Caco-2 (cell line): ENCODE measurements at regions of chr4 and their contacts with region 1.

Region 1: GRCh38 chr4:7843831-7844593 is 95.6 kb downstream of the AFAP1 start:
- DNase-seq: peak; percentile 73 to 79
- H3K4me3 ChIP-seq: no peak overlapping the region
- H3K4me3 Mint-ChIP-seq: no peak overlapping the region
- H3K27ac Mint-ChIP-seq: peak overlapping the region; percentile 25
- H3K4me1 ChIP-seq: peaks cover 6% of the 10 kb centered on the region; the same call in 1 of the 2 replicates
- H3K4me1 Mint-ChIP-seq: no peaks in the 10 kb centered on the region
- H3K27me3 ChIP-seq: no peaks in the 10 kb centered on the region
- H3K27me3 Mint-ChIP-seq: no peaks in the 10 kb centered on the region
- CTCF ChIP-seq: peak; percentile 66 to 71

Region 2: GRCh38 chr4:7770224-7771050 is 73.6 kb before region 1 on chr4:
- CTCF ChIA-PET with region 1: no interaction called
- POLR2A ChIA-PET with region 1: no interaction called
- intact Hi-C with region 1: loop called (anchors 1 kb)
- DNase-seq: peak; percentile 51 to 68
- H3K4me3 ChIP-seq: no peak overlapping the region
- H3K4me3 Mint-ChIP-seq: no peak overlapping the region
- H3K27ac Mint-ChIP-seq: peak overlapping the region; percentile 76
- H3K4me1 ChIP-seq: no peaks in the 10 kb centered on the region
- H3K4me1 Mint-ChIP-seq: peaks cover 24% of the 10 kb centered on the region
- H3K27me3 ChIP-seq: no peaks in the 10 kb centered on the region
- H3K27me3 Mint-ChIP-seq: no peaks in the 10 kb centered on the region
- CTCF ChIP-seq: peak; percentile 62 to 68

Region 3: GRCh38 chr4:7792616-7793015 is 51.4 kb before region 1 on chr4:
- CTCF ChIA-PET with region 1: no interaction called
- POLR2A ChIA-PET with region 1: no interaction called
- intact Hi-C with region 1: no loop called
- DNase-seq: no peak
- H3K4me3 ChIP-seq: no peak overlapping the region
- H3K4me3 Mint-ChIP-seq: no peak overlapping the region
- H3K27ac Mint-ChIP-seq: no peak overlapping the region
- H3K4me1 ChIP-seq: no peaks in the 10 kb centered on the region
- H3K4me1 Mint-ChIP-seq: no peaks in the 10 kb centered on the region
- H3K27me3 ChIP-seq: no peaks in the 10 kb centered on the region
- H3K27me3 Mint-ChIP-seq: no peaks in the 10 kb centered on the region
- CTCF ChIP-seq: no peak

Region 4: DNA sequence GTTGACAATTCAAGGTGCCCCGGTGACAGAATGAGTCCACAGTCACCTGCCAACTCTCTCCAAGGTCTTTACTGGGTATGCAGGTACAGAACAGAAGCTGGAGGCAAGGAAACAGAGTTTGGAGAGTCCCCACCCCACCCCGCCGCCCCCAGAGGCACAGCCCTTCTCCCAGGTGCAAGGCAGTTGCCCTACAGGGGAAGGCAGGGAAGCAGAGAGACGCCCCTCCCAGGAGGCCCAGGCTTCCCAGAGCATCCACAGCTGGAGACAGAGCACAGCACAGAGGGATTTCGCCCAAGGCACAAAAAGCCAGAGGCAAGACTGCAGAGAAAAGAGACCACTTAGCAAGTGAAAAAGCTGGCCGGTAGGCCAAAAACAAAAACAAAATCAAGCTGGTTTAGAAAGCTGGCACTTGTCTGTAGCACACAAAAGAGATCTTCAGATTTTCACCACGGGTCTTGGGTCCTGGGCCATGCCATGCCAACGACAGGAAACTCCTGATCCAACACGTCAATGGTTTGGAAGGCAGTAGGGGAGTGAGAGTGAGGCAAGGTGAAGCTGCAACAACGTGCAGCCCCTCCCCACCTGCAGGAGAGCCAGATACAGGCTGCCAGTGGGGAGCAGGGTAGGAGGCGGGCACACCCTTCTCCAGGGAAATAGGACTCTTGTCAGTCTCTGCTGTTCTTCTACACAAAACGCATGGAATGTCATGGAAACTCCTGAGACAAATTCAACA is 17.7 kb before region 1 on chr4:
- CTCF ChIA-PET with region 1: no interaction called
- POLR2A ChIA-PET with region 1: no interaction called
- intact Hi-C with region 1: no loop called
- DNase-seq: no peak
- H3K4me3 ChIP-seq: no peak overlapping the region
- H3K4me3 Mint-ChIP-seq: no peak overlapping the region
- H3K27ac Mint-ChIP-seq: no peak overlapping the region
- H3K4me1 ChIP-seq: peaks cover 8% of the 10 kb centered on the region; the same call in 1 of the 2 replicates
- H3K4me1 Mint-ChIP-seq: peaks cover 24% of the 10 kb centered on the region
- H3K27me3 ChIP-seq: no peaks in the 10 kb centered on the region
- H3K27me3 Mint-ChIP-seq: no peaks in the 10 kb centered on the region
- CTCF ChIP-seq: no peak

Region 5: DNA sequence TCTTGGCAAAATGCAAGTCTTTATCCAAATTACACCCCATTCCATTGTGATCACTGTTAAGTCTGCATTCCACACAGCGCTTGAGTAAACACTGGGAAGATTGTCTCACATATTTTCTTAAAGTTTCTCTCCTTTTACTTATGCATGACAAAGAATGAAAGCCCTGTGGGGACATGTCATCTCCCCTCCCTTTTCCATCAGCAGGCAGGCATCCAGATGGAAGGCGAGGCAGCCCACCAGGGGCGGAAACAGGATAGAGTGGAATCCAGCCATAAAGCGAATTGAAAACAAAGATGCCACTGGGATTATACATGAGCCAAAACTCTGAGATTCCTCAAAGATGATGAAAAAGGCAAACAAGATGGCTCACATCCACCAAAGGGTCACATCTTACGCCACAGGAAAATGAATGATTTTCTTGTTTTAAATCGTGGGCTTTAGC is 17.4 kb after region 1 on chr4:
- CTCF ChIA-PET with region 1: no interaction called
- POLR2A ChIA-PET with region 1: no interaction called
- intact Hi-C with region 1: no loop called
- DNase-seq: peak; percentile 60 to 65
- H3K4me3 ChIP-seq: no peak overlapping the region
- H3K4me3 Mint-ChIP-seq: peak overlapping the region; percentile 54
- H3K27ac Mint-ChIP-seq: peak overlapping the region; percentile 92
- H3K4me1 ChIP-seq: peaks cover 44% of the 10 kb centered on the region
- H3K4me1 Mint-ChIP-seq: peaks cover 32% of the 10 kb centered on the region
- H3K27me3 ChIP-seq: no peaks in the 10 kb centered on the region
- H3K27me3 Mint-ChIP-seq: no peaks in the 10 kb centered on the region
- CTCF ChIP-seq: no peak